Endothelial cell of umbilical vein (primary cell): ENCODE measurements at regions of chr7 and their contacts with region 1.

Region 1: GRCh38 chr7:118352854-118353453 is 128.4 kb downstream of the ANKRD7 start:
- DNase-seq: no peak
- H3K4me3 ChIP-seq: no peak overlapping the region
- H3K27ac ChIP-seq: no peak overlapping the region
- H3K4me1 ChIP-seq: no peaks in the 10 kb centered on the region
- H3K27me3 ChIP-seq: no peaks in the 10 kb centered on the region
- CTCF ChIP-seq: no peak
- POLR2A ChIP-seq: no peak

Region 2: DNA sequence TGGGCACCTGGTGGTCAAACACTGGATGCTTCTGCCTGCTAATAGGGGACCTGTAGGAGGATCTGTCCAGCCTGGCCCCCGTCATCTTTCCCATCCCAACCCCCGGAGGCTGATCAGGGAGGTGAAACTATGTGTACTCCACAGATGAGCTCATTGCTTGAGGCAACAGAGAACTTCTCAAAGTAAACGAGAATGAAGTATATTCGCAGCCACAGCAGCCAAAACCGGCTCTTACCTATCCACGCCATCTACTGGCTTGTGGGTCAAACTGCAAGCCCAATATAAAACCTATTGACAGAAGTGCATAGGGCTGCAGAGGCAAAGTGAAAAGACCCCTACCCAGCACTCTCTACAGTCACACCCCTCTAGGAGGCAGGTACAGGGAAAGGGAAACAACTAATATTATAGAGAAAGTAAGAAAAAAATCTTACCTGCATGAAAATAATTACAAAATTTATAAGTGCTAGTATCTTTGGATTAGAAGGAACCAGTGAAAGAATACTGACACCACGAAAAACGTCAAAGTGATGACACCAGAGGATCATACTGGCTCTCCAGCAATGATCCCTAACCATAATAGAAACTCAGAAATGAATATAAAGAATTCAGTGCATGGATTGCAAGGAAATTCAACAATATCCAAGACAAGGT is 845.0 kb after region 1 on chr7:
- CTCF ChIA-PET with region 1: no interaction called
- POLR2A ChIA-PET with region 1: no interaction called
- dilution Hi-C with region 1: no loop called
- intact Hi-C with region 1: loop called (anchors 5 kb)
- DNase-seq: peak; percentile 12
- H3K4me3 ChIP-seq: no peak overlapping the region
- H3K27ac ChIP-seq: no peak overlapping the region
- H3K4me1 ChIP-seq: no peaks in the 10 kb centered on the region
- H3K27me3 ChIP-seq: no peaks in the 10 kb centered on the region
- CTCF ChIP-seq: peak; percentile 57 to 67
- POLR2A ChIP-seq: no peak